Naive thymus-derived CD4-positive, alpha-beta T cell (primary cell): ENCODE measurements at regions of chr4 and their contacts with region 1.

Region 1: GRCh38 chr4:77203380-77204197 is 46.6 kb downstream of the CCNG2 start:
- DNase-seq: peak; percentile 23 to 73 (median 61)
- ATAC-seq: peak; percentile 87
- H3K4me3 ChIP-seq: no peak overlapping the region
- H3K4me3 Mint-ChIP-seq: no peak overlapping the region
- H3K27ac ChIP-seq: no peak overlapping the region
- H3K27ac Mint-ChIP-seq: no peak overlapping the region
- H3K4me1 ChIP-seq: no peaks in the 10 kb centered on the region
- H3K4me1 Mint-ChIP-seq: peaks cover 0 to 7% (median 0%) of the 10 kb centered on the region in 7 donors
- H3K27me3 ChIP-seq: no peaks in the 10 kb centered on the region
- H3K27me3 Mint-ChIP-seq: peaks cover 0 to 25% (median 5%) of the 10 kb centered on the region in 5 donors

Region 2: GRCh38 chr4:75908555-75908954 is 1295.0 kb before region 1 on chr4:
- CTCF ChIA-PET with region 1: no interaction called
- POLR2A ChIA-PET with region 1: no interaction called
- intact Hi-C with region 1: no loop called
- DNase-seq: no peak
- ATAC-seq: no peak
- H3K4me3 ChIP-seq: no peak overlapping the region
- H3K4me3 Mint-ChIP-seq: no peak overlapping the region
- H3K27ac ChIP-seq: no peak overlapping the region
- H3K27ac Mint-ChIP-seq: no peak overlapping the region
- H3K4me1 ChIP-seq: no peaks in the 10 kb centered on the region
- H3K4me1 Mint-ChIP-seq: peaks cover 0 to 2% (median 0%) of the 10 kb centered on the region in 7 donors
- H3K27me3 ChIP-seq: no peaks in the 10 kb centered on the region
- H3K27me3 Mint-ChIP-seq: peaks cover 0 to 5% (median 0%) of the 10 kb centered on the region in 5 donors

Region 3: DNA sequence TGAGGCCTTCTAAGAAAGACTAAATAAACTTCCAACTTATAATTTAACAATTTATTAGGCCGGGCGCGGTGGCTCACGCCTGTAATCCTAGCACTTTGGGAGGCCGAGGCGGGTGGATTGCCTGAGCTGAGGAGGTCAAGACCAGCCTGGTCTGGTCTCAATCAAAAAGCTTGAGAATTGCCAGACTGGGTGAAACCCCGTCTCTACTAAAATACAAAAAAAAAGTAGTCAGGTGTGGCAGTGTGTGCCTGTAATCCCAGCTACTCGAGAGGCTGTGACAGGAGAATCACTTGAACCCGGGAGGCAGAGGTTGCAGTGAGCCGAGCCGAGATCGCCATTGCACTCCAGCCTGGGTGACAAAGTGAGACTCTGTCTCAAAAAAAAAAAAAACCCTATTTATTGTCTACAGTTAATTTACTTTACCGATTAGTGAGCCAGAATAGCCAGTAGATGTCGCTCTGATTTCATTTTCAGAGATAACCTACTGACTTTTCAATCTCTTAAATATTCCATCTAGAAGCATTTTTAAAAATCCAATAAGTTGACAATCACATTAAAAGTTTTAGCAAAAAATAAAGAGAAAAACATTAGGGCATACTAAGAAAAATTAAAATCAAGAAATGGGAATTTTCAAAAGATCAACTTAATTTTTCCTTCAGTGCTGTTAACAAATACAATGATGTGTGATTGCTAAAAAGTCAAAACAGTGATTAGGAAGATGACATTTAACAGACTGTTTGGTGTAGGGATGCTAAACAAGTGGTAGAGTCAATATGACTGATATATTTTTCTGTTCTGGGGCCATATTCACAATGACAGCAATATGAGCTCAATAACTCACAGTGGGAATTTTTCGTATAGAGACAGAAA is 772.8 kb before region 1 on chr4:
- CTCF ChIA-PET with region 1: interaction called, 9 read pairs
- POLR2A ChIA-PET with region 1: no interaction called
- intact Hi-C with region 1: loop called in 1 of 2 experiments (anchors 2 kb)
- DNase-seq: peak in 3 of 9 donors; percentile 17 to 32 (median 18)
- ATAC-seq: no peak
- H3K4me3 ChIP-seq: no peak overlapping the region
- H3K4me3 Mint-ChIP-seq: no peak overlapping the region
- H3K27ac ChIP-seq: no peak overlapping the region
- H3K27ac Mint-ChIP-seq: no peak overlapping the region
- H3K4me1 ChIP-seq: no peaks in the 10 kb centered on the region
- H3K4me1 Mint-ChIP-seq: peaks cover 0 to 4% (median 0%) of the 10 kb centered on the region in 7 donors
- H3K27me3 ChIP-seq: no peaks in the 10 kb centered on the region
- H3K27me3 Mint-ChIP-seq: peaks cover 20 to 37% (median 22%) of the 10 kb centered on the region in 5 donors

Region 4: GRCh38 chr4:76969941-76970529 is 233.6 kb before region 1 on chr4:
- CTCF ChIA-PET with region 1: no interaction called
- POLR2A ChIA-PET with region 1: no interaction called
- intact Hi-C with region 1: loop called in 1 of 2 experiments (anchors 1 kb)
- DNase-seq: no peak
- ATAC-seq: no peak
- H3K4me3 ChIP-seq: no peak overlapping the region
- H3K4me3 Mint-ChIP-seq: no peak overlapping the region
- H3K27ac ChIP-seq: no peak overlapping the region
- H3K27ac Mint-ChIP-seq: peak overlapping the region in 1 of 9 donors; percentile 43
- H3K4me1 ChIP-seq: no peaks in the 10 kb centered on the region
- H3K4me1 Mint-ChIP-seq: peaks cover 0 to 11% (median 10%) of the 10 kb centered on the region in 7 donors
- H3K27me3 ChIP-seq: no peaks in the 10 kb centered on the region
- H3K27me3 Mint-ChIP-seq: peaks cover 0 to 20% (median 0%) of the 10 kb centered on the region in 5 donors

Region 5: GRCh38 chr4:77065382-77065781 is 138.2 kb before region 1 on chr4:
- CTCF ChIA-PET with region 1: interaction called, 11 read pairs
- POLR2A ChIA-PET with region 1: no interaction called
- intact Hi-C with region 1: no loop called
- DNase-seq: no peak
- ATAC-seq: no peak
- H3K4me3 ChIP-seq: no peak overlapping the region
- H3K4me3 Mint-ChIP-seq: no peak overlapping the region
- H3K27ac ChIP-seq: no peak overlapping the region
- H3K27ac Mint-ChIP-seq: peak overlapping the region in 3 of 9 donors; percentile 25 to 77 (median 59)
- H3K4me1 ChIP-seq: peaks cover 0 to 7% of the 10 kb centered on the region in 2 donors
- H3K4me1 Mint-ChIP-seq: peaks cover 26 to 57% (median 43%) of the 10 kb centered on the region in 7 donors
- H3K27me3 ChIP-seq: no peaks in the 10 kb centered on the region
- H3K27me3 Mint-ChIP-seq: no peaks in the 10 kb centered on the region

Region 6: DNA sequence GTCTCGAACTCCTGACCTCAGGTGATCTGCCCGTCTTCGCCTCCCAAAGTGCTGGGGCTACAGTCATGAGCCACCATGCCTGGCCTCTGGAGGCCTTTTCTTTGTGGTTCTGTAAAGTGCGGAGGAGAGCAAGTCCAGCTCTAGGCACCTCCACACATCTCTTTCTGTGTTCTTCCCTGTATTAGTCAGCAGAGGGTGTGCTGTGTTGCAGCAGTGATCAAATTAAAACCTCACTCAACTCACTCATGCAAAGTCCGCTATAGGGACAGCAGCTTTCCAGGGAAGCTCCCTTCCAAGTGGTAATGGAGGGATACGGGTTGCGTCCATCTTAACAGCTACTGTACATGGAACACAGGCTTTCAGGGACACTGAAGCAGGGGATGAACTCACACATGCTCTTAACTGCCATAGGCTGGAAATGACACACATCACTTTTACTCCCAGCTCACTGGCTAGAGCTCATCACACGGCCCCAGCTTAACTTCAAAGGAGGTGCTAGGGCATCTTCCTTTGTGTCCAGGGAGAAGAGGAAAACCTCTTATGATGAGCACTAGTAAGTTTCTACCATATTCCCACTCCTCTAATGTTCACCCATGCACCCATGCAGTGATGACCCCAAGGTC is 82.6 kb before region 1 on chr4:
- CTCF ChIA-PET with region 1: interaction called, 7 read pairs
- POLR2A ChIA-PET with region 1: no interaction called
- intact Hi-C with region 1: loop called in 1 of 2 experiments (anchors 1 kb)
- DNase-seq: no peak
- ATAC-seq: no peak
- H3K4me3 ChIP-seq: no peak overlapping the region
- H3K4me3 Mint-ChIP-seq: no peak overlapping the region
- H3K27ac ChIP-seq: no peak overlapping the region
- H3K27ac Mint-ChIP-seq: no peak overlapping the region
- H3K4me1 ChIP-seq: no peaks in the 10 kb centered on the region
- H3K4me1 Mint-ChIP-seq: peaks cover 0 to 3% (median 0%) of the 10 kb centered on the region in 7 donors
- H3K27me3 ChIP-seq: peaks cover 0 to 3% of the 10 kb centered on the region in 2 donors
- H3K27me3 Mint-ChIP-seq: peaks cover 0 to 14% (median 0%) of the 10 kb centered on the region in 5 donors

Region 7: GRCh38 chr4:77385124-77385969 is 181.8 kb after region 1 on chr4:
- CTCF ChIA-PET with region 1: no interaction called
- POLR2A ChIA-PET with region 1: no interaction called
- intact Hi-C with region 1: no loop called
- DNase-seq: peak in 7 of 9 donors; percentile 19 to 51 (median 39)
- ATAC-seq: peak; percentile 72
- H3K4me3 ChIP-seq: no peak overlapping the region
- H3K4me3 Mint-ChIP-seq: no peak overlapping the region
- H3K27ac ChIP-seq: no peak overlapping the region
- H3K27ac Mint-ChIP-seq: no peak overlapping the region
- H3K4me1 ChIP-seq: no peaks in the 10 kb centered on the region
- H3K4me1 Mint-ChIP-seq: peaks cover 0 to 8% (median 0%) of the 10 kb centered on the region in 7 donors
- H3K27me3 ChIP-seq: no peaks in the 10 kb centered on the region
- H3K27me3 Mint-ChIP-seq: peaks cover 0 to 8% (median 0%) of the 10 kb centered on the region in 5 donors

Region 8: GRCh38 chr4:77418333-77419038 is 214.9 kb after region 1 on chr4:
- CTCF ChIA-PET with region 1: no interaction called
- POLR2A ChIA-PET with region 1: no interaction called
- intact Hi-C with region 1: no loop called
- DNase-seq: peak in 2 of 9 donors; percentile 0 to 9
- ATAC-seq: no peak
- H3K4me3 ChIP-seq: no peak overlapping the region
- H3K4me3 Mint-ChIP-seq: no peak overlapping the region
- H3K27ac ChIP-seq: no peak overlapping the region
- H3K27ac Mint-ChIP-seq: no peak overlapping the region
- H3K4me1 ChIP-seq: no peaks in the 10 kb centered on the region
- H3K4me1 Mint-ChIP-seq: no peaks in the 10 kb centered on the region
- H3K27me3 ChIP-seq: no peaks in the 10 kb centered on the region
- H3K27me3 Mint-ChIP-seq: peaks cover 5 to 27% (median 9%) of the 10 kb centered on the region in 5 donors

Region 9: GRCh38 chr4:78560296-78560963 is 1356.8 kb after region 1 on chr4:
- CTCF ChIA-PET with region 1: no interaction called
- POLR2A ChIA-PET with region 1: no interaction called
- intact Hi-C with region 1: no loop called
- DNase-seq: no peak
- ATAC-seq: no peak
- H3K4me3 ChIP-seq: no peak overlapping the region
- H3K4me3 Mint-ChIP-seq: no peak overlapping the region
- H3K27ac ChIP-seq: no peak overlapping the region
- H3K27ac Mint-ChIP-seq: no peak overlapping the region
- H3K4me1 ChIP-seq: no peaks in the 10 kb centered on the region
- H3K4me1 Mint-ChIP-seq: peaks cover 0 to 2% (median 0%) of the 10 kb centered on the region in 7 donors
- H3K27me3 ChIP-seq: no peaks in the 10 kb centered on the region
- H3K27me3 Mint-ChIP-seq: peaks cover 10 to 25% (median 12%) of the 10 kb centered on the region in 5 donors